Heart left ventricle (tissue), 16 donors: ENCODE measurements at regions of chr12 and their contacts with region 1.

Region 1: DNA sequence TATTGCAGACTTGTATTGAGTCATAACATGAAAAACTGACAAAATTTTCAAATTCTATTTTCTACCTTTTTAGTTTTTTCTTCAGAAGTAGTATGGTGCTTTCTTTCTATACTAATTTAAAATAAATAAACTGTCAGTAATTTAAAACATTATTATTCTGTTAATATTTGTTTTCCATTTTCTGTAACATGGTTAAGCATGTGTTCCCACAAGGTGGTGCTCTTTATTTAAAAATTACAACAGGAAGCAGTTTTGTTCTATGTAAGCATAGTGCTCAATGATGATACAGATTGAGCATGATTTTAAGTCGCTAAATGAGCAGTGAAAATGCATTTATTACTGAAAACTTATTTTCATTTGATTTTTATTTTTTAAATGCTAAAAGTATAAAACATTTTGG is 114.6 kb downstream of the PPFIA2 start:
- DNase-seq: no peak
- ATAC-seq: peak in 1 of 4 donors; percentile 58
- H3K4me3 ChIP-seq: no peak overlapping the region
- H3K27ac ChIP-seq: no peak overlapping the region
- H3K4me1 ChIP-seq: no peaks in the 10 kb centered on the region
- H3K27me3 ChIP-seq: no peaks in the 10 kb centered on the region
- CTCF ChIP-seq: peak; percentile 15 to 65 (median 53)
- POLR2A ChIP-seq: no peak

Region 2: DNA sequence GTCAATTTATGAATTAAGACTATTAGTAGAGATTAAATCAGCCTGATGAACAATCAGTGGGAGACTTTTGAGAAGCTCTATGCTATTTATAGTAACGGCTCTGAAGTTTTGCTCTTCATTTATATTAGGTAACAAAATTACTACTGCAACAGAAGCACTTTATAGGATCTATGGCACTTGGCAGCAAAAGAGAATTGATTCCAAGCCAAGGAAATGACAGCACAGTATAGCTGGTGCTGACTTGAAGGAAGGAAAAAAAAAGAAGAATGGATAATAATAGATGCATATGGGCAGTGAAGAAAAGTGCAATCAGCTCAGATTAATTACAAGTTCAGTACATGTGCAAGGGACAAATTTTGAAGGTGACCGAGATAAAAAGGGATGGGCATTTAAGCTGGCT is 342.9 kb after region 1 on chr12:
- intact Hi-C with region 1: loop called in 1 of 10 experiments (anchors 10 kb)
- DNase-seq: no peak
- ATAC-seq: no peak
- H3K4me3 ChIP-seq: no peak overlapping the region
- H3K27ac ChIP-seq: no peak overlapping the region
- H3K4me1 ChIP-seq: no peaks in the 10 kb centered on the region
- H3K27me3 ChIP-seq: no peaks in the 10 kb centered on the region
- CTCF ChIP-seq: no peak
- POLR2A ChIP-seq: no peak

Region 3: GRCh38 chr12:82326905-82327503 is 682.5 kb after region 1 on chr12:
- intact Hi-C with region 1: loop called (anchors 2 to 5 kb)
- DNase-seq: no peak
- ATAC-seq: no peak
- H3K4me3 ChIP-seq: no peak overlapping the region
- H3K27ac ChIP-seq: no peak overlapping the region
- H3K4me1 ChIP-seq: no peaks in the 10 kb centered on the region
- H3K27me3 ChIP-seq: no peaks in the 10 kb centered on the region
- CTCF ChIP-seq: peak; percentile 15 to 63 (median 48)
- POLR2A ChIP-seq: no peak